Heart left ventricle (tissue), 16 donors: ENCODE measurements at regions of chr5 and their contacts with region 1.

Region 1: GRCh38 chr5:141040771-141041426 is 10.3 kb upstream of the PCDHB1 start:
- DNase-seq: peak; percentile 86 to 95 (median 91)
- ATAC-seq: peak; percentile 93 to 99 (median 98)
- H3K4me3 ChIP-seq: peak overlapping the region in 11 of 12 donors; percentile 12 to 60 (median 41)
- H3K27ac ChIP-seq: peak overlapping the region in 4 of 12 donors; percentile 4 to 57 (median 25)
- H3K4me1 ChIP-seq: peaks cover 0 to 14% (median 0%) of the 10 kb centered on the region in 12 donors
- H3K27me3 ChIP-seq: peaks cover 0 to 18% (median 0%) of the 10 kb centered on the region in 9 donors
- CTCF ChIP-seq: peak; percentile 47 to 83 (median 67)
- POLR2A ChIP-seq: no peak

Region 2: GRCh38 chr5:140372971-140373487 is 667.9 kb before region 1 on chr5:
- intact Hi-C with region 1: loop called in 2 of 10 experiments (anchors 10 kb)
- DNase-seq: peak; percentile 75 to 79 (median 78)
- ATAC-seq: peak; percentile 39 to 90 (median 86)
- H3K4me3 ChIP-seq: no peak overlapping the region
- H3K27ac ChIP-seq: peak overlapping the region in 1 of 12 donors; percentile 3
- H3K4me1 ChIP-seq: peaks cover 0 to 9% (median 8%) of the 10 kb centered on the region in 12 donors
- H3K27me3 ChIP-seq: no peaks in the 10 kb centered on the region
- CTCF ChIP-seq: peak; percentile 69 to 90 (median 79)
- POLR2A ChIP-seq: no peak

Region 3: GRCh38 chr5:140595538-140596300 is 445.2 kb before region 1 on chr5:
- intact Hi-C with region 1: no loop called
- DNase-seq: peak in 3 of 5 donors; percentile 51 to 59 (median 57)
- ATAC-seq: peak in 3 of 4 donors; percentile 79 to 82 (median 80)
- H3K4me3 ChIP-seq: peak overlapping the region in 1 of 12 donors; percentile 12
- H3K27ac ChIP-seq: peak overlapping the region in 9 of 12 donors; percentile 16 to 81 (median 43)
- H3K4me1 ChIP-seq: peaks cover 0 to 48% (median 11%) of the 10 kb centered on the region in 12 donors
- H3K27me3 ChIP-seq: no peaks in the 10 kb centered on the region
- CTCF ChIP-seq: no peak
- POLR2A ChIP-seq: no peak

Region 4: DNA sequence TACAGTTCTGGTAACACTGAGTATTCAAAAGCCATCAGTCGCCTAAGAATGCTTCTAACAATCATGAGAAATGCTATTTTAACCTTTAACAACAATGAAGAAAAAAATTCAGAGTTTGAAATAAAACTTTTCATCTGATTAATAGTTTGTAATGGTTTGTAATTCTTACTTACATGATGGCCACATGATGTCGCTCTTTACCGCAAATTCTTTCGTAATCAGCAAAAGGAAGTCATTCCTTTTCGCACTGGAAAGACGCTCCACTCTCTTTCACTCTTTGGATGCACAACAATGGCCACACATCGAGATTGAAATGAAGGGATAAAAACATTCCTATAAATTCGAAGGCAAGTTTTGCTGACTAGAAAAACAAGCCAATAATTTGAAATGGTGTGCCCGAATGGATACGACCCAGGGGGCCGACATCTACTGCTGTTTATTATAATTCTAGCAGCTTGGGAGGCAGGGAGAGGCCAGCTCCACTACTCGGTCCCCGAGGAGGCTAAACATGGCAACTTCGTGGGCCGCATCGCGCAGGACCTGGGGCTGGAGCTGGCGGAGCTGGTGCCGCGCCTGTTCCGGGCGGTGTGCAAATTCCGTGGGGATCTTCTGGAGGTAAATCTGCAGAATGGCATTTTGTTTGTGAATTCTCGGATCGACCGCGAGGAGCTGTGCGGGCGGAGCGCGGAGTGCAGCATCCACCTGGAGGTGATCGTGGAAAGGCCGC is 206.7 kb before region 1 on chr5 and contains the start of gene PCDHA7:
- intact Hi-C with region 1: loop called in 1 of 10 experiments (anchors 10 kb)
- DNase-seq: no peak
- ATAC-seq: no peak
- H3K4me3 ChIP-seq: peak within 1 kb of the TSS in 5 of 12 donors; percentile 18 to 41 (median 34)
- H3K27ac ChIP-seq: no peak within 1 kb of the TSS
- H3K4me1 ChIP-seq: no peaks in the 10 kb centered on the region
- H3K27me3 ChIP-seq: peaks cover 9 to 90% (median 26%) of the 10 kb centered on the region in 9 donors
- CTCF ChIP-seq: peak in 5 of 12 donors; percentile 9 to 33 (median 23)
- POLR2A ChIP-seq: no peak
- total RNA-seq, gene PCDHA7: 0.11 to 0.27 (median 0.20) TPM in 4 of 9 donors, not detected in the others

Region 5: GRCh38 chr5:140868721-140869554 is 172.0 kb before region 1 on chr5 and contains the start of gene PCDHA11:
- intact Hi-C with region 1: loop called in 3 of 10 experiments (anchors 5 to 10 kb)
- DNase-seq: no peak
- ATAC-seq: no peak
- H3K4me3 ChIP-seq: peak within 1 kb of the TSS in 2 of 12 donors; percentile 8 to 16
- H3K27ac ChIP-seq: no peak within 1 kb of the TSS
- H3K4me1 ChIP-seq: no peaks in the 10 kb centered on the region
- H3K27me3 ChIP-seq: peaks cover 0 to 77% (median 11%) of the 10 kb centered on the region in 9 donors
- CTCF ChIP-seq: peak in 2 of 12 donors; percentile 19 to 29
- POLR2A ChIP-seq: no peak
- total RNA-seq, gene PCDHA11: 0.08 to 0.13 TPM in 2 of 9 donors, not detected in the others

Region 6: GRCh38 chr5:140882591-140882899 is 158.4 kb before region 1 on chr5:
- intact Hi-C with region 1: loop called in 2 of 10 experiments (anchors 10 kb)
- DNase-seq: no peak
- ATAC-seq: no peak
- H3K4me3 ChIP-seq: peak overlapping the region in 3 of 12 donors; percentile 16 to 31 (median 19)
- H3K27ac ChIP-seq: no peak overlapping the region
- H3K4me1 ChIP-seq: no peaks in the 10 kb centered on the region
- H3K27me3 ChIP-seq: peaks cover 0 to 65% (median 15%) of the 10 kb centered on the region in 9 donors
- CTCF ChIP-seq: no peak
- POLR2A ChIP-seq: no peak